ENCODE measurements at regions of chr21 and their contacts with region 1.

Region 1: DNA sequence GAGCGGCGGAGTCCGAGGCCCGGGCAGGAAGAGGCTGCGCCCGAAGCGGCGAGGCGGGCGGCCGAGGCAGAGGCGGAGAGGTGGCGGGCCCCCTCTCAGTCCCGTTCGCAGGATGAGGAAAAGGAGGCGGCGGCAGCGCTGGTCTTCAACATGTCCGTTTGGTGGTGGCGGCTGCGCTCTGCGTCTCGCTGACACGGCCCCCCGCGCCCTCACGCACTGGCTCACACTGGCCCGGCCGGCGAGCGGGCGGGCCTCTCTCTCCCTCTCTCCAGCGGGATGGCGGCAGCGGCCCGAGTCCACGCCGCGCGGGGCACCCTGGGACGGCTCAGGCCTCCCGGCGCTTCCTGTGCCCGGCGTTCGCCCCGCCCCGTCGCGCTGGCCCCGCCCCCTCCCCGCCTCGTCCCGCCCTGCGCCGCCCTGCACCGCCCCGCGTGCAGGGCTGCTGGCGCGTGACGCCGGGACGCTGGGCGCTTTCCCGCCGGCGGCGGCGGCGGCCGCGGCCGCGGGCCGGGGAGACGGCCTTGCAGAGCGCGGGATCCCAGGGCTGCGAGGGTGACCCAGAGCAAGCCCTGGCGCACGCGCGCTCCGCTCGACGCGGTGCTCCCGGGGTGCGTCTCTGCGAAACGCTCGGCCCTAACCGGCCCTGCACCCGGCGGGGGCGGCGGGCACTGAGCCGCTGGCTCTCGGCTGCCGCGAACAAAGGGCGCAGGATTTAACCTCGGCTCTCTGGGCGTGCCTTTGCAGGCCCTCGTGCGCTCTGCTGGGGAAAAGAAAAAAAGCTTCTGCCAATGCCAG is at the start of gene SCAF4:
- DNase-seq: peak; percentile 73 to 80 (median 76)
- H3K4me3 ChIP-seq: peak within 1 kb of the TSS; percentile 67 to 89
- H3K4me3 Mint-ChIP-seq: peak within 1 kb of the TSS; percentile 24 to 94 (median 90)
- H3K27ac ChIP-seq: peak within 1 kb of the TSS; percentile 82
- H3K27ac Mint-ChIP-seq: peak within 1 kb of the TSS; percentile 54 to 94 (median 88)
- H3K4me1 ChIP-seq: peaks cover 50% of the 10 kb centered on the region
- H3K4me1 Mint-ChIP-seq: peaks cover 4 to 18% (median 9%) of the 10 kb centered on the region in 4 donors
- H3K27me3 ChIP-seq: no peaks in the 10 kb centered on the region
- H3K27me3 Mint-ChIP-seq: no peaks in the 10 kb centered on the region
- total RNA-seq, gene SCAF4: 60.2 to 64.7 TPM

Region 2: DNA sequence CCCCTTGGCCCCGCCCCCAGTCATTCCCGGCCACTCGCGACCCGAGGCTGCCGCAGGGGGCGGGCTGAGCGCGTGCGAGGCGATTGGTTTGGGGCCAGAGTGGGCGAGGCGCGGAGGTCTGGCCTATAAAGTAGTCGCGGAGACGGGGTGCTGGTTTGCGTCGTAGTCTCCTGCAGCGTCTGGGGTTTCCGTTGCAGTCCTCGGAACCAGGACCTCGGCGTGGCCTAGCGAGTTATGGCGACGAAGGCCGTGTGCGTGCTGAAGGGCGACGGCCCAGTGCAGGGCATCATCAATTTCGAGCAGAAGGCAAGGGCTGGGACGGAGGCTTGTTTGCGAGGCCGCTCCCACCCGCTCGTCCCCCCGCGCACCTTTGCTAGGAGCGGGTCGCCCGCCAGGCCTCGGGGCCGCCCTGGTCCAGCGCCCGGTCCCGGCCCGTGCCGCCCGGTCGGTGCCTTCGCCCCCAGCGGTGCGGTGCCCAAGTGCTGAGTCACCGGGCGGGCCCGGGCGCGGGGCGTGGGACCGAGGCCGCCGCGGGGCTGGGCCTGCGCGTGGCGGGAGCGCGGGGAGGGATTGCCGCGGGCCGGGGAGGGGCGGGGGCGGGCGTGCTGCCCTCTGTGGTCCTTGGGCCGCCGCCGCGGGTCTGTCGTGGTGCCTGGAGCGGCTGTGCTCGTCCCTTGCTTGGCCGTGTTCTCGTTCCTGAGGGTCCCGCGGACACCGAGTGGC is 72.3 kb before region 1 on chr21 and contains the start of gene SOD1:
- CTCF ChIA-PET with region 1: no interaction called
- POLR2A ChIA-PET with region 1: interaction called, 6 read pairs
- intact Hi-C with region 1: loop called (anchors 1 kb)
- DNase-seq: peak; percentile 95 to 97 (median 96)
- H3K4me3 ChIP-seq: peak within 1 kb of the TSS; percentile 70 to 79
- H3K4me3 Mint-ChIP-seq: peak within 1 kb of the TSS; percentile 98 to 100 (median 100)
- H3K27ac ChIP-seq: peak within 1 kb of the TSS; percentile 77
- H3K27ac Mint-ChIP-seq: peak within 1 kb of the TSS; percentile 81 to 100 (median 99)
- H3K4me1 ChIP-seq: peaks cover 64% of the 10 kb centered on the region
- H3K4me1 Mint-ChIP-seq: peaks cover 43 to 80% (median 60%) of the 10 kb centered on the region in 4 donors
- H3K27me3 ChIP-seq: no peaks in the 10 kb centered on the region
- H3K27me3 Mint-ChIP-seq: no peaks in the 10 kb centered on the region
- total RNA-seq, gene SOD1: 178 to 198 TPM

Region 3: GRCh38 chr21:31720330-31720729 is 11.7 kb before region 1 on chr21:
- CTCF ChIA-PET with region 1: no interaction called
- POLR2A ChIA-PET with region 1: no interaction called
- intact Hi-C with region 1: loop called (anchors 1 kb)
- DNase-seq: no peak
- H3K4me3 ChIP-seq: no peak overlapping the region
- H3K4me3 Mint-ChIP-seq: peak overlapping the region in 1 of 8 donors; percentile 16
- H3K27ac ChIP-seq: no peak overlapping the region
- H3K27ac Mint-ChIP-seq: no peak overlapping the region
- H3K4me1 ChIP-seq: peaks cover 80% of the 10 kb centered on the region
- H3K4me1 Mint-ChIP-seq: peaks cover 54 to 89% (median 69%) of the 10 kb centered on the region in 4 donors
- H3K27me3 ChIP-seq: no peaks in the 10 kb centered on the region
- H3K27me3 Mint-ChIP-seq: no peaks in the 10 kb centered on the region

Region 4: GRCh38 chr21:31766899-31767298 is 34.9 kb after region 1 on chr21:
- CTCF ChIA-PET with region 1: no interaction called
- POLR2A ChIA-PET with region 1: no interaction called
- intact Hi-C with region 1: no loop called
- DNase-seq: no peak
- H3K4me3 ChIP-seq: no peak overlapping the region
- H3K4me3 Mint-ChIP-seq: no peak overlapping the region
- H3K27ac ChIP-seq: no peak overlapping the region
- H3K27ac Mint-ChIP-seq: no peak overlapping the region
- H3K4me1 ChIP-seq: no peaks in the 10 kb centered on the region
- H3K4me1 Mint-ChIP-seq: no peaks in the 10 kb centered on the region
- H3K27me3 ChIP-seq: no peaks in the 10 kb centered on the region
- H3K27me3 Mint-ChIP-seq: peaks cover 5 to 8% of the 10 kb centered on the region in 2 donors

Measured in CD4-positive, alpha-beta memory T cell (primary cell).